Activated naive CD4-positive, alpha-beta T cell treated with anti-CD3 and anti-CD28 coated beads for 36 hours (primary cell): ENCODE measurements at regions of chr1 and their contacts with region 1.

Region 1: GRCh38 chr1:174159252-174160108 is at the start of gene RABGAP1L:
- DNase-seq: peak; percentile 94
- H3K4me3 Mint-ChIP-seq: peak within 1 kb of the TSS; percentile 83
- H3K27ac Mint-ChIP-seq: peak within 1 kb of the TSS; percentile 93
- H3K4me1 Mint-ChIP-seq: peaks cover 56% of the 10 kb centered on the region
- H3K27me3 Mint-ChIP-seq: no peaks in the 10 kb centered on the region
- total RNA-seq, gene RABGAP1L: 16.6 TPM

Region 2: DNA sequence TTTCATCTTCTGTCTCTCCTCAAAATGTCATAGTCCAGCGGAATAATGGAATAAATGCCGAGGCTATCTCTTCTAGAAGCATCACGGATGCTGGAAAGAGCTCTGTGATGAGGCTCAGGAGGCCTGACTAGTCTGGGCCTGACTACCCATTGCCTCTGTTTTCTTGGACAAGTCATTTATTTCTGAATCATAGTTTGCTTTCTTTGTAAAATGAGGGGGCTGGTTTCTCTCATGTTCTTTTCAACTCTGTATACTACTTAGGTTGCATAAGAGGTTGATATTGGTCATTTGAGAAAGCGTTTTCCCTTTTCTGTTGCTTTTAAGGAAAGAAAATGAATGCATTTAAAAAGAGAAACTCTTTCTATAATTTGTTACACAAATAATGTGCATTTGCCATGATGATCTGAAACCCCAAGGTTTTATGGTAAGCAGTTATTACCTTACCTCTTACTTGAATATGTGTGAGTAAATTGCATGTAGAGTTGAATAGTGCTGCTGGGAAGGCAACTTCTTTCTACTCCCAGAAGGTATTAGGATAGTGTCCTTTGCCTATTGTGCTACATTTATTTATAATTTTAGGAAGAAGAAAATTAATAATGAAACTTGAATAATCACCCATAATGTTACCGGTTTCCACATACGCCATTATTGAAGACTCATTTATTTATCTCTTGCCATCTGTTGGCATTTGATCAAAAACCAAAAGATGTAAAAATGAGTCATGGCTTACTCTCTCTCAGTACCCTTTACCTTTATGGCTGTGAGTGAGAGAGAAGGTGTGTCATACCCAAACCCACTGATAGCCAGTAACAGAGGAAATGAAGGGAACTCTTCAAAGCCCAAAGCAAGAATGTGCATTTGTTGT is 1321.4 kb before region 1 on chr1:
- CTCF ChIA-PET with region 1: no interaction called
- intact Hi-C with region 1: loop called (anchors 10 kb)
- DNase-seq: peak; percentile 46
- H3K4me3 Mint-ChIP-seq: no peak overlapping the region
- H3K27ac Mint-ChIP-seq: no peak overlapping the region
- H3K4me1 Mint-ChIP-seq: peaks cover 19% of the 10 kb centered on the region
- H3K27me3 Mint-ChIP-seq: peaks cover 25% of the 10 kb centered on the region

Region 3: GRCh38 chr1:173429471-173430402 is 729.7 kb before region 1 on chr1:
- CTCF ChIA-PET with region 1: no interaction called
- intact Hi-C with region 1: loop called (anchors 5 kb)
- DNase-seq: peak; percentile 86
- H3K4me3 Mint-ChIP-seq: peak overlapping the region; percentile 42
- H3K27ac Mint-ChIP-seq: peak overlapping the region; percentile 43
- H3K4me1 Mint-ChIP-seq: peaks cover 16% of the 10 kb centered on the region
- H3K27me3 Mint-ChIP-seq: no peaks in the 10 kb centered on the region

Region 4: DNA sequence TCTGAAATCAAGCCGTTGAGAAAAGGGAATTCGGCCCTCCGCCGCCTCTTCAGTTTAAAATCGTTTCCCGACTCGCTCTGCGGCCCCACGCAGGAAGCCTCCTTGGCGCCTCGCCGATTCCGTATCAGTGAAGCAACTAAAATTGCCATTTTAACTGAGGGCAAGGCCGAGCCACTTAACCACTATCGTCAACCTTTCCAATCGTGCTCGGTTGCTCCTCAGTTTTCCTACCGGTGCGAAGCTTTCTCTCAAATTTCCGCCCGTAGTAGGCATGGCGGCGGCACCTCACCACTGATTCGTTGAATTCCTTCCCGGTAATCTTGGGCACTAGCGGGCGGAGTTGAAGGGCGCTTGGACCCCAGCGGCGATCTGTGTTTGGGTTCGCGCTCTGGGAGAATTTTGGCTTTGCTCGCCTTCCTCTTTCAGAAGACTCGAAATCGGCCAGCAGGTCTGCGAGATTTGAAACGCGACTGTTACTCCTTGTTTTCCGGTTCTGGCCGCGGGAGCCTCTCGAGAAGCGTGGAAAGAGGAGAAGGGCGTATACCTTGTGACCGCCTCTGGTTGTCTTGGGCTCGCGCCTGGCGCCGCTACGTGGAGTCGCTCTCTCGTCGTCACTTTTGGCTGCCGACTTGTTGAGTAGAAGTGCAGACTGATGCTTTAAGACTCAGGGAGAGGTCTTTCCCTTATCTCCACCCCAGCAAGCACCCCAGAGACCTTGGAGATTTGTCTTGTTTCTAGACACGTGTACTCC is 335.0 kb before region 1 on chr1 and contains the starts of genes CENPL and DARS2:
- CTCF ChIA-PET with region 1: no interaction called
- intact Hi-C with region 1: loop called (anchors 1 kb)
- DNase-seq: peak; percentile 95
- H3K4me3 Mint-ChIP-seq: peak within 1 kb of the TSS; percentile 93
- H3K27ac Mint-ChIP-seq: peak within 1 kb of the TSS; percentile 98
- H3K4me1 Mint-ChIP-seq: peaks cover 46% of the 10 kb centered on the region
- H3K27me3 Mint-ChIP-seq: no peaks in the 10 kb centered on the region
- total RNA-seq, gene CENPL: 31.1 to 31.9 TPM
- total RNA-seq, gene DARS2: 42.7 to 44.1 TPM

Region 5: GRCh38 chr1:174174461-174175329 is 15.2 kb after region 1 on chr1:
- CTCF ChIA-PET with region 1: interaction called, 6 read pairs
- intact Hi-C with region 1: loop called (anchors 1 kb)
- DNase-seq: peak; percentile 71
- H3K4me3 Mint-ChIP-seq: no peak overlapping the region
- H3K27ac Mint-ChIP-seq: no peak overlapping the region
- H3K4me1 Mint-ChIP-seq: peaks cover 35% of the 10 kb centered on the region
- H3K27me3 Mint-ChIP-seq: no peaks in the 10 kb centered on the region

Region 6: DNA sequence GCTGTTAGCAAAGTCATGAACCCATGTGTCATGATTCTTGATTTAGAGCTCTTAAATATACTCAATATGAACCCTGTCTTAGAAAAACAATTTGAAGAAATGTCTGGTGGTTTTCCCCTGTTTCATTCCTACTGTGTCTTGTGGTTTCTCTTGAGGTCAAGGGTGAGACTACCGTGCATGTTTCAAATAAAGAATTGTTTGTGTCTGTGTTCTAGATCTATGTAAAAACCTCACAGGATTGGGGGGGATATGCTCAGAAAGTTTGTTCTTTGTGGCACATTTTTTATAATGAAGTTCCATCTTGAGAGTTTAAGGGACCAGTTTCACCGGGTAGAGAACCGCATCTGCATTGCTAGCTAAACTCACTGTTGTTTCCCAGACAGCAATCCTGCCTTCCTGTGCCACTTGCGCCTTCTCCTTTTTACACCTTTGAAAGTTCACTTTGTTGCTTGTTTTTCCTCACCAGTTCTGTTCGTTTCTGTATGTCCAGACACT is 809.3 kb after region 1 on chr1:
- CTCF ChIA-PET with region 1: no interaction called
- intact Hi-C with region 1: loop called (anchors 2 kb)
- DNase-seq: peak; percentile 49
- H3K4me3 Mint-ChIP-seq: peak overlapping the region; percentile 51
- H3K27ac Mint-ChIP-seq: peak overlapping the region; percentile 86
- H3K4me1 Mint-ChIP-seq: peaks cover 63% of the 10 kb centered on the region
- H3K27me3 Mint-ChIP-seq: no peaks in the 10 kb centered on the region